Dorsolateral prefrontal cortex (tissue), 120 donors: ENCODE measurements at regions of chr12 and their contacts with region 1.

Region 1: GRCh38 chr12:93979189-93979588 is 169.2 kb upstream of the PLXNC1 start:
- DNase-seq: no peak
- H3K4me3 ChIP-seq: no peak overlapping the region
- H3K27ac ChIP-seq: no peak overlapping the region
- H3K27me3 ChIP-seq: no peaks in the 10 kb centered on the region
- CTCF ChIP-seq: peak in 45 of 56 donors; percentile 2 to 56 (median 37)

Region 2: GRCh38 chr12:93415723-93416464 is 563.3 kb before region 1 on chr12:
- intact Hi-C with region 1: no loop called
- DNase-seq: no peak
- H3K4me3 ChIP-seq: no peak overlapping the region
- H3K27ac ChIP-seq: peak overlapping the region in 4 of 59 donors; percentile 3 to 27 (median 10)
- H3K27me3 ChIP-seq: no peaks in the 10 kb centered on the region
- CTCF ChIP-seq: peak in 1 of 56 donors; percentile 5

Region 3: GRCh38 chr12:93751864-93752610 is 227.2 kb before region 1 on chr12:
- intact Hi-C with region 1: loop called in 1 of 2 experiments (anchors 5 kb)
- DNase-seq: no peak
- H3K4me3 ChIP-seq: no peak overlapping the region
- H3K27ac ChIP-seq: no peak overlapping the region
- H3K27me3 ChIP-seq: no peaks in the 10 kb centered on the region
- CTCF ChIP-seq: no peak

Region 4: GRCh38 chr12:93766796-93767523 is 212.2 kb before region 1 on chr12:
- intact Hi-C with region 1: loop called in 1 of 2 experiments (anchors 10 kb)
- DNase-seq: peak in 2 of 10 donors; percentile 46 to 71
- H3K4me3 ChIP-seq: no peak overlapping the region
- H3K27ac ChIP-seq: peak overlapping the region in 9 of 59 donors; percentile 14 to 48 (median 29)
- H3K27me3 ChIP-seq: no peaks in the 10 kb centered on the region
- CTCF ChIP-seq: peak; percentile 22 to 82 (median 63)

Region 5: DNA sequence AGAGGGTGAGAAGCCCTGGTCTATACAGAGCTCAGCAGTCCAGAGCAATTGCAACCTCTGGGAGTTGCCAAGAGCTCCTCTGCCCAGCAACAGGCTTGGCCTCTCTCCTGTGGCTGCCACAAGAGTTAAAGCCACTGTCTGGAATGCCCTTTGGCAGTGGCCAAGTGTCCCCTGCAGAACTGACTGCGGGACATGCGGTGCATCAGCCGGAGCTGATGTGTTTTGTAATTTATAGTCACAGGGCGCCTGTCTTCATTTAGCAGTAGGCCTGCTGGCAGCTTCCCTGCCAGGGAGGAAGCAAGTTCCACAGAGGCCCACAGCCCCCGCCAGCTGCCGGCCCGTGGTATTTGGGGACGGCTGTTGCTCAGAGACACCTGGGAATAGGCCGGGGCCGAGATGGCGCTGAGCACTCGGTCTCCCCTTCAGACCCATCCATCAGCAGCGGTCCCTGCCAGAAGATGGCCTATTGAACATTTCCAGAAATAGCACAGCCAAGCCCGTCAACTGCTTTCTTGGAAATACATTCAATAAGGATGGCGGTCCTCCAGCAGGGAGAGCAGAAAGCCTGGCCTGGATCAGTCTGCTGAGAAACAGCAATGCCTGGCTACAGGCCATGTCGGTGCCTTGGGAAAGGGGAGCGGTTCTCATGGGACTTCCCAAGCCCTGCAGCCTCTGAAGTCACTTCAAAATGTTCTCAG is 84.6 kb before region 1 on chr12:
- intact Hi-C with region 1: loop called in 1 of 2 experiments (anchors 5 kb)
- DNase-seq: peak; percentile 24 to 79 (median 72)
- H3K4me3 ChIP-seq: peak overlapping the region in 41 of 59 donors; percentile 1 to 51 (median 27)
- H3K27ac ChIP-seq: peak overlapping the region in 55 of 59 donors; percentile 12 to 85 (median 67)
- H3K27me3 ChIP-seq: no peaks in the 10 kb centered on the region
- CTCF ChIP-seq: peak in 2 of 56 donors; percentile 9 to 10

Region 6: GRCh38 chr12:94195443-94195842 is 216.3 kb after region 1 on chr12:
- intact Hi-C with region 1: no loop called
- DNase-seq: no peak
- H3K4me3 ChIP-seq: no peak overlapping the region
- H3K27ac ChIP-seq: no peak overlapping the region
- H3K27me3 ChIP-seq: no peaks in the 10 kb centered on the region
- CTCF ChIP-seq: no peak